OCI-LY7 (cell line): ENCODE measurements at regions of chr1 and their contacts with region 1.

Region 1: DNA sequence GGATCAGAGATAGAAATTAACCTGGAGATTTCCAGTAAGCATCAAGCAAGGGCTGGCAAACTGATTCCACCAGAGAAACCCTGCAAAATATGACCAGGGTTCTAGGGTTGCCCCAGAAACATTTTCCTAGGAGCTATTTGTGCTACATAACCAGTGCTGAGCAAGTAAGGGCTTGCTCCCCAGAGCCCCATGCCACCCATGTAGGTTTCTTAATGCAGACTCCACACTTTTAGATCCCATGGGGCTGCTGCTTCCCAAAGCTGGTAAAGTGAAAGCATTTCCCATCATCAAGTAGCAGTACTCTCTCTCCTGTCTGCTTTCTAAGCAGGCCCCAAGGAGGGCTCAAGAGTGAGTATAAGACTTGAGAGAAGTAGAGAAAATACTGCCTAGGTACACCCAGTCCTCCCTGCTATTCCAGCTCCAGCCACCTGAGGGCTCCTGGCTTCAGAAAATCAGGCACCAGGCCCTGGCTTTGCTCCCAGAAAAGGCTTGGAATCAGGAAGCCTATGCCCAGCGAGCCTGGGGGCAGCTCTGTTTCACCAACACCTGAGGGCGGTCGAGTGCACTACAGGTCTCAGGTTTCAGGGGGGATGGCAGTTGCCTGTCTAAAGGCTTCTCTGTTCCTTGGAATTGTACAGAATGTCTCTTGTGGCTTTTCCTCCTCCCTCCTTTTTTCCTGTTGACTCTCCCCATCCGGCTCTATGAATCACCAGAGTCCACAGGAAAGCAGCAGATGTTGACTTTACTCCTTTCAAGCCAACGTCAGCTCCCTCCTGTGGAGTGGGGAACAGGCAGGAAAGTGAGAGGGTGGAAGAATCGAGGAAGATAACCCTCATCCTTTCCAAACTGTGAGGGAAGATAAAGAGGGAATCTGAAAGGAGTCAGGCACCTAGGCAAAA is 6.2 kb upstream of the ANKRD35 start:
- DNase-seq: peak; percentile 66
- H3K4me3 ChIP-seq: no peak overlapping the region
- H3K27ac ChIP-seq: no peak overlapping the region
- H3K4me1 ChIP-seq: no peaks in the 10 kb centered on the region
- CTCF ChIP-seq: peak; percentile 91

Region 2: GRCh38 chr1:146012737-146013403 is 121.0 kb after region 1 on chr1:
- CTCF ChIA-PET with region 1: no interaction called
- POLR2A ChIA-PET with region 1: interaction called, 4 read pairs
- intact Hi-C with region 1: loop called (anchors 1 kb)
- DNase-seq: peak; percentile 76
- H3K4me3 ChIP-seq: no peak overlapping the region
- H3K27ac ChIP-seq: no peak overlapping the region
- H3K4me1 ChIP-seq: peaks cover 3% of the 10 kb centered on the region
- CTCF ChIP-seq: peak; percentile 99